ENCODE measurements at regions of chr7 and their contacts with region 1.

Region 1: DNA sequence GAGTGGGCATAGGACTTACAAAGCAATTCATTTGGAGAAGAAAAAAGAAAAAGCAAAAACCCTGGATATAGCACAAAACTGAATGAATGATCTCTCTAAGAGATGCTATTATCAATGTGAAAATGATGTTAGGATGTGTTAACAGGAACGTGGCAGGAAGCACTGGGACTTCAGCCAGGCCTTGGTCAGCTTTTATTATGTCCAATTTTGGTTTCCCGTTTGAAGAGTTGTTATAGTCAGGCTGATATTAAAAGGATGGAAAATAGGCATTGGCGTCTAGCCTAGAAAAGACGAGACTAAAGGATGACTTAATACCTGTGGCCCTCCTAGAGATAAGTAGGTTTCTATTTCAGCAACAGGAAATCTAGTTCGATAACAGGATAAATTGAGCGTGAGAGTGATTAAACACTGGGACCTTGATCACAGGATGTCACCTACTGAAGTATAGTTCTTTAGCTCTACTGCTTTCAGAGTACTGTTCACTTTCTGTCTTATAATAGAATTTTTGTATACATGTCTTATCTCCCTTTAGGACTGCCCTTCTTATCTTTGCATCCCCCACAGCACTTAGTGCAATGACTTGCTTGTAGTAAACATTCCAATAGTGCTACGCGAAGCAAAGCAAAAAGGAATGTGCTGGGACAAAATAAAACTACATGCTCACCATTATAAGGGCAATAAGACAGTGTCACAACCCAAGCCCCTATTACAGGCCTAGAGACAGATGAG is 99.8 kb upstream of the AGBL3 start:
- DNase-seq: peak in 6 of 9 donors; percentile 10 to 45 (median 34)
- ATAC-seq: peak; percentile 52
- H3K4me3 ChIP-seq: no peak overlapping the region
- H3K4me3 Mint-ChIP-seq: peak overlapping the region in 8 of 10 donors; percentile 40 to 65 (median 59)
- H3K27ac ChIP-seq: peak overlapping the region; percentile 48
- H3K27ac Mint-ChIP-seq: peak overlapping the region in 8 of 9 donors; percentile 79 to 95 (median 86)
- H3K4me1 ChIP-seq: peaks cover 0 to 23% of the 10 kb centered on the region in 2 donors
- H3K4me1 Mint-ChIP-seq: peaks cover 17 to 41% (median 39%) of the 10 kb centered on the region in 7 donors
- H3K27me3 ChIP-seq: no peaks in the 10 kb centered on the region
- H3K27me3 Mint-ChIP-seq: peaks cover 0 to 5% (median 5%) of the 10 kb centered on the region in 5 donors

Region 2: GRCh38 chr7:134834689-134835462 is 51.6 kb before region 1 on chr7:
- CTCF ChIA-PET with region 1: no interaction called
- POLR2A ChIA-PET with region 1: no interaction called
- intact Hi-C with region 1: loop called in 1 of 2 experiments (anchors 5 kb)
- DNase-seq: no peak
- ATAC-seq: no peak
- H3K4me3 ChIP-seq: no peak overlapping the region
- H3K4me3 Mint-ChIP-seq: no peak overlapping the region
- H3K27ac ChIP-seq: no peak overlapping the region
- H3K27ac Mint-ChIP-seq: no peak overlapping the region
- H3K4me1 ChIP-seq: no peaks in the 10 kb centered on the region
- H3K4me1 Mint-ChIP-seq: no peaks in the 10 kb centered on the region
- H3K27me3 ChIP-seq: no peaks in the 10 kb centered on the region
- H3K27me3 Mint-ChIP-seq: peaks cover 0 to 2% (median 0%) of the 10 kb centered on the region in 5 donors

Region 3: DNA sequence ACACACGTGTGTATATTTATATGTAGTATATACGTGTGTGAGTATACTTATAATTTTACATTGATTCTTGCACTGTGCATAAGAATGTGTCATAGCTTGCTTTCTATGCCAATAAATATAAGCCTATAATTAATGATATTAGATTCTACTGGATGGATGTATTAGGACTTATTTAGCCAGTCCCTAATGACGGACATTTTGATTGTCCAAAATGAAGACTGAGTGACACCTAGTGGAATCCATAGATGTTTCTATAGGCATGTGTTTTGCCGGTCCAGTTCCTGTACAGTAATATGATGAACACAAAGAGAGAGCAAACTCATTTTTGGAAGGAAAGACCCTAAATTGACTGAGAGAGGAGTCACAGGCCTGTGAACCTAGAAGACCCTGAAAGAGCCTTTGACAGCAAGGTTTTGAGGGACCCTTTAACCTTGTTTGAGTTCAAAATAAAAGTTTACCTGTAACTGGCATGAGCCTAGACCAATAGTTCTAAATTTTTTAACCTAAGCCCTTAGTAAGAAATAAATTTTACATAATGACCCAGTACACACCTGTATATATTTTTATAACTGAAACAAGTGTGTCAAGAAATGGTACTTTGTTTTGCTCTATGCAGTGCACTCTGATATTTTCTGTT is 57.4 kb after region 1 on chr7:
- CTCF ChIA-PET with region 1: interaction called, 3 read pairs
- POLR2A ChIA-PET with region 1: no interaction called
- intact Hi-C with region 1: loop called in 1 of 2 experiments (anchors 5 kb)
- DNase-seq: no peak
- ATAC-seq: no peak
- H3K4me3 ChIP-seq: no peak overlapping the region
- H3K4me3 Mint-ChIP-seq: no peak overlapping the region
- H3K27ac ChIP-seq: no peak overlapping the region
- H3K27ac Mint-ChIP-seq: peak overlapping the region in 1 of 9 donors; percentile 20
- H3K4me1 ChIP-seq: peaks cover 0 to 13% of the 10 kb centered on the region in 2 donors
- H3K4me1 Mint-ChIP-seq: peaks cover 7 to 33% (median 22%) of the 10 kb centered on the region in 7 donors
- H3K27me3 ChIP-seq: no peaks in the 10 kb centered on the region
- H3K27me3 Mint-ChIP-seq: peaks cover 0 to 4% (median 0%) of the 10 kb centered on the region in 5 donors

Region 4: DNA sequence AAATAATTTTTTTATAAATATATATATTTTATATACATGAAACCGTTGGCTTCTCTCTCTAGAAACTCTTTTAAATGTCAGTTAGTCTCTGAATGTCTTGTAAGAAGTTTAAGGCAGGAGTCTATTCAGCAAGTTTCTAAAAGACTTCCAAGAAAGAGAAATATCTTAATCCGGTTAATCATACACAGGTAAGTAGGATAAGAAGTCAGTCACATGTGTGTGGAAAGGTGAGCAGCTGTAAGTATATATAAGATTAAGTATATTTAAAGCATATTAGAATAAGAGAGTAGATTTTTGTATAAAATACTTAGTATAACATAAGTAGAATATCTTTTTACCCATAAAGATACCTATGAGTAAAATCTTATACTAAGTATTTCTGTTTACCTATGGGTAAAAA is 148.7 kb after region 1 on chr7:
- CTCF ChIA-PET with region 1: no interaction called
- POLR2A ChIA-PET with region 1: no interaction called
- intact Hi-C with region 1: no loop called
- DNase-seq: no peak
- ATAC-seq: no peak
- H3K4me3 ChIP-seq: no peak overlapping the region
- H3K4me3 Mint-ChIP-seq: no peak overlapping the region
- H3K27ac ChIP-seq: no peak overlapping the region
- H3K27ac Mint-ChIP-seq: no peak overlapping the region
- H3K4me1 ChIP-seq: no peaks in the 10 kb centered on the region
- H3K4me1 Mint-ChIP-seq: no peaks in the 10 kb centered on the region
- H3K27me3 ChIP-seq: no peaks in the 10 kb centered on the region
- H3K27me3 Mint-ChIP-seq: peaks cover 0 to 7% (median 0%) of the 10 kb centered on the region in 5 donors

Measured in naive thymus-derived CD4-positive, alpha-beta T cell (primary cell).